Dorsolateral prefrontal cortex (tissue), 120 donors: ENCODE measurements at regions of chr6 and their contacts with region 1.

Region 1: GRCh38 chr6:51855310-51856082 is 231.9 kb downstream of the PKHD1 start:
- DNase-seq: no peak
- H3K4me3 ChIP-seq: no peak overlapping the region
- H3K27ac ChIP-seq: no peak overlapping the region
- H3K27me3 ChIP-seq: peaks cover 0 to 22% (median 2%) of the 10 kb centered on the region in 45 donors
- CTCF ChIP-seq: peak; percentile 36 to 81 (median 68)

Region 2: DNA sequence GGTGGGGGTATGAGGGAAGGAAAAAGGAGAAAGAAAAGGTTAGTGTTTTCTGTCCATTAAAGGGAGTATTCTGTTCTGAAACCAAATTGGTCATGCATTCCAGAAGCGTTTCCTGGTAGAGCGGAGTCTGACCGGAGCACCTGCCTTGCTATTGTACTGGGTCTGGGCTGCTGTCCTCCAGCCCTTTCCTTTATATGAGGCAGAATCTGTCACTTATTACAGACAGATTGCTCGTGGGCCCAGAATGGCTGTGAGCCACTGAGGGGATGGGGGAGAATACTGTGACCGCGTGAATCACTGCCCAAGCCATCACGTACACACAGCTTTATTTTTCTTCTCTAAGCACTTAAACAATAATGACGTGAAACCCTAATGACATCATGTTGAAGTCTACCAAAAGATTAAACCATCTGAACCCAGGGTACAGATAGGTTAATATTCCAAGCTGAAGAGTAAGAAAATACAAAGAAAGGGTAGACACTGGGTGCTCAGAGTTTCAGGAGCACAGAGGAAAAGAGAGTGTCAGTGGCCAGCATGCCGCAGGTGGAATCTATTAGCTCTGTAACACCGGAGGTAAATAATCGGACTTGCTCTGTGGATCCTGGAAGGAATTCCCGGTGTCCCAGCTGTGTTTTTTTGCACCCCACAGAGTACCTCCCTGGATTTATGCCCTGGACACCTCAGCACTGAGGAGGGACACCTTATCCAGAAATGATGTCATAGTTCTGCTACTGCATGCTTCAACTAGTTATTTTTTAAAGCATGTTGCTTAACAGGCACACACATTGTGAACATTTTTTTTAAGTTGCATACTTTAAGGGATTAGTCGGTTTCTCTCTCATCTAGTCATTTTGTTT is 341.4 kb before region 1 on chr6:
- intact Hi-C with region 1: no loop called
- DNase-seq: no peak
- H3K4me3 ChIP-seq: peak overlapping the region in 1 of 59 donors; percentile 11
- H3K27ac ChIP-seq: no peak overlapping the region
- H3K27me3 ChIP-seq: peaks cover 0 to 13% (median 0%) of the 10 kb centered on the region in 45 donors
- CTCF ChIP-seq: no peak

Region 3: DNA sequence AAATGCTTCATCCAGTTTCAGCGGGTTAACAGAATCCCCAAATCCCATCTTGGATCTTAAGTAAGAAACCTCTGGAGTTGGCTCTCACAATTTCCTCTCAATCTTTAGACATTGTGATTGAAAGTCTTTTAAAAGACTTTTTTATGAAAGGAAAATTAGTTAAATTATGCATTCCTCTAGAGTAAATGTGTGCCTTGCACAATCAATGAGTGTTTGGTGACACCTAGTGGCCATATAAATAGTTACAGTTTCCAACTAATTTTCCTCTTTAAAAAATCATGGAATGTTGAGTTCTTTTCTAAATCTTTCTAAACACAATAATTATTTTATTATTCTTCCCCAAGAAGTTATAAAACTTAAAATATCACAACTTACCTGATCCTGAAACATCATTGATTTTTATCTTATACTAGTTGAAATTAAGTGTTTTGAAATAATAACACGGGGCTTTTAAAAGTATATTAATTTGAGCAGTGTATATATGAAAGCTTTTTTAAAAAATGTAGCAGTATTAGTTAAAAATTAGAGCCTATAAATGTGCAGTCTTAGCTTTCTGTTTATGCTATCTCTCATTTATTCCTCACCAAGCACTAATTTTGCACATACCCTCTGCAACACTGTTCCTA is 165.6 kb after region 1 on chr6:
- intact Hi-C with region 1: loop called in 1 of 2 experiments (anchors 10 kb)
- DNase-seq: no peak
- H3K4me3 ChIP-seq: no peak overlapping the region
- H3K27ac ChIP-seq: no peak overlapping the region
- H3K27me3 ChIP-seq: peaks cover 0 to 28% (median 4%) of the 10 kb centered on the region in 45 donors
- CTCF ChIP-seq: peak; percentile 68 to 96 (median 85)